ENCODE measurements at regions of chr7 and their contacts with region 1.

Region 1: DNA sequence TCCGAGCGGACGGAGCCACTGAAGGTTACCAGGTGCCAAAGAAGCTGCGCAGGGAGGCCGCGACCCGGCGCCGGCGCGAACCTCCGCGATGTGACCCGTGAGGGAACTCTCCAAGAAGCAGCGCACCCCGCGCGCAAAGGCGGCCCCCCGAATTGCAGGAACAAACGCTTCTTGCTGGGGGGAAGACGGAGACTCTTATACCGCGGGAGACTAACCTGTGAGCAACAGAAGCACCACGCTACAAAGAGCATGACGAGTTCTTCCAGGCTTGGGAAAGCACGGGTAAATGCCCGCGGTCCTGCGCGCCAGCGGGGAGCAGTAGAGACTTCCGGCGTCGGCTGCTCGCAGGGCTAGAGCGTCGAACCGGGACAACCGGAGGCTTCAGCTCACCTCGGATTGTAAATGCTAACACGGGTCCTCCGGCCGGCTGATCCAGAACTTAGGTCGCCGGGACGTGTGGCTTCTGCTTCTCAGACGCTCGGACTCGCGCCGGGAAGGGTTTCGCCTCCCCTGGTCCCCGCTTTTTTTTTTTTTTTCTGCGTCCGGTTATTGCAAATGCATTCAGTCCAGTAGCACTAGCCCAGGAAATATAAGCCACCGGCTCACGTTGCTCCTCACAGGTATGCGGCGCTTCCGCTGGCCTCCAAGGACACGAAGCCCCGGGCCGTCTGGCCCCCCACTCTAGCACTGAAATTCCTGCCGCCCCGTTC is at the start of gene COA1:
- DNase-seq: peak; percentile 86
- ATAC-seq: peak; percentile 99
- total RNA-seq, gene COA1: 56.8 TPM

Region 2: GRCh38 chr7:43781726-43782607 is 52.6 kb after region 1 on chr7:
- intact Hi-C with region 1: no loop called
- DNase-seq: no peak
- ATAC-seq: peak; percentile 65

Region 3: GRCh38 chr7:43834463-43835251 is 105.3 kb after region 1 on chr7:
- intact Hi-C with region 1: loop called (anchors 10 kb)
- DNase-seq: no peak
- ATAC-seq: no peak

Region 4: GRCh38 chr7:45174966-45175765 is 1445.8 kb after region 1 on chr7:
- intact Hi-C with region 1: loop called (anchors 5 kb)
- DNase-seq: peak; percentile 36
- ATAC-seq: no peak

Measured in sciatic nerve (tissue), 2 donors.